ENCODE measurements at regions of chr11 and their contacts with region 1.

Region 1: DNA sequence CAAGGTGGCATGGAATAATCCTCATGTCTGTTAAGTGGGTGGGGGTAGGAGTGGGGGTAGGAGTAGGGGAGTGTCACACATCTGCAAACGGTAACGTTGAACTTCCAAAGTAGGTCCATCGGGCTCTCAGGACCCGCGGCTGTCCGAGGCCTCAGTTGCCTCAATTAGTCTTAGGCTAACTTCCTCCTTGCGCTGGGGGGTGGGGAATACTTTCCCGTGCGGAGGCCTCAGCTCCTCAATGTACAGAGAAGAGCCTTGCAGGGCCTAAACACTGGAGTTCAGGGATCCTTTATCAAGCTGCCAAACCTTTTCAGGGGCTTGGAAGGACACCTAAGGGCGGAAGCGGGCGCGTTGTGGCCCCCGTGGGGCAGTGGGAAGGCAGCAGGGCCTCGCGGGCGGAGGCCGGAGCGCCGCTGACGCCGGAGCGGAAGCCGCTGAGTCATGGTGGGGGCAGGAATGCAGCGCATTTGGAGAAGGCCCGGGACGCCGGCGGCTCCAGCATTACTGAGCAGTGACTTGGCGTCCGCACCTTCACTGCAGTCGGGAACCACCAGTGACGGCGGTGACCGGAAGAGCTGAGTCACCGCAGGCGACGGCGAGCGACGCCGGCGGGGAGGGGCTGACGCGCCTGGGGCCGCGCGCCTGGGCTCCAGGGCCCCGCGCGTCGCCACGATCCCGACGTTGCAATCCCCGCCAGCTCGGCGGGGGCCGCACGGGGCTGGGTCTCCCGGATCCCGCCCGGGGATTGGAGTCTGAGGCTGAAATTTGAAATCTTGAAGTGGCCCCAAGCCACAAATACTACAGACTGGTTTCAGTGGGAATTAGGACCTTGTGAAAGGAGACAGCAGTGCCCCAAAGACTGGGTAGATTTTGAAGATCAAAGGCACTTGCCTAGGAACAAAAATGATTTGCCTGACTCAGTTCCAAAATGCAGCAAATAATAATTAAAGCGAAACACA is 20.2 kb upstream of the IPO7 start:
- DNase-seq: peak; percentile 92
- H3K4me3 Mint-ChIP-seq: peak overlapping the region; percentile 82
- H3K27ac Mint-ChIP-seq: peak overlapping the region; percentile 93
- H3K4me1 Mint-ChIP-seq: peaks cover 14% of the 10 kb centered on the region
- H3K27me3 Mint-ChIP-seq: peaks cover 4% of the 10 kb centered on the region

Region 2: DNA sequence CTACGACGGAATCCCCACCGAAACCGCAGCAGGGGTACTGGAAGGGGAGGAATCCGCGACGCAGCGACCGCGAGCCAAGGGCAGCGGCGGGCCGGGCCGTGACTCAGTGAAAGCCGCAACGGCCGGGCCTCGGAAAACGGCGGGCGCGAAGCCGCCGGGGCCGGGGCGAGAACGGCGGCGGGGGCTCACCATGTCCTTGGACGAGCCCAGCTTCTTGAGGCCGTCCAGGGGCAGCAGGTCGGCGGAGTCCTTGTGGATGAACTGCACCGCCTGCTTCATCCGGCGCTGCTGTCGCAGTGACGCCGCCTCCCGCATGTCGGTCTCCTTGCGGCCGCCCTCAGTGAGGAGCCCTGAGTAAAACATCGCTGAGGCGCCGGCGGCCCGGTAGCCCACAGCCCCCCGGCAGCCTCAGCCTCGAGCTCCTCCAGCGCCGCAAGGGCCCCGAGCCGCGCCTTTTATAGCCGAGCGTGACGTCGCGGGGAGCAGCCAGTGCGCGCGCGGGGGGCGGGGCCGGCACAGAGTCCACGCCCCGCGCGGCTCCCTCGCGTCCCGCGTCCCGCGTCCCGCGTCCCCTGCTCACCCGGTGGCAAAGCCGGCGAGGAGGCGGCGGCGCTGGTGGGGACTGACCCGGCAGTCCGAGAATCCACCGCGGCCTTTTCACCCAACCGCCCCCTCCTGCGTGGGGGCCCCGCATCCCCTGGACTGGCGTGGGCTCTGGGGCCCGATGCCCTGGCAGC is 360.5 kb before region 1 on chr11 and contains the start of gene NRIP3:
- intact Hi-C with region 1: loop called (anchors 5 kb)
- DNase-seq: peak; percentile 94
- H3K4me3 Mint-ChIP-seq: peak within 1 kb of the TSS; percentile 86
- H3K27ac Mint-ChIP-seq: peak within 1 kb of the TSS; percentile 77
- H3K4me1 Mint-ChIP-seq: peaks cover 26% of the 10 kb centered on the region
- H3K27me3 Mint-ChIP-seq: peaks cover 45% of the 10 kb centered on the region
- total RNA-seq, gene NRIP3: 4.8 and 5.3 TPM in 2 replicates

Region 3: DNA sequence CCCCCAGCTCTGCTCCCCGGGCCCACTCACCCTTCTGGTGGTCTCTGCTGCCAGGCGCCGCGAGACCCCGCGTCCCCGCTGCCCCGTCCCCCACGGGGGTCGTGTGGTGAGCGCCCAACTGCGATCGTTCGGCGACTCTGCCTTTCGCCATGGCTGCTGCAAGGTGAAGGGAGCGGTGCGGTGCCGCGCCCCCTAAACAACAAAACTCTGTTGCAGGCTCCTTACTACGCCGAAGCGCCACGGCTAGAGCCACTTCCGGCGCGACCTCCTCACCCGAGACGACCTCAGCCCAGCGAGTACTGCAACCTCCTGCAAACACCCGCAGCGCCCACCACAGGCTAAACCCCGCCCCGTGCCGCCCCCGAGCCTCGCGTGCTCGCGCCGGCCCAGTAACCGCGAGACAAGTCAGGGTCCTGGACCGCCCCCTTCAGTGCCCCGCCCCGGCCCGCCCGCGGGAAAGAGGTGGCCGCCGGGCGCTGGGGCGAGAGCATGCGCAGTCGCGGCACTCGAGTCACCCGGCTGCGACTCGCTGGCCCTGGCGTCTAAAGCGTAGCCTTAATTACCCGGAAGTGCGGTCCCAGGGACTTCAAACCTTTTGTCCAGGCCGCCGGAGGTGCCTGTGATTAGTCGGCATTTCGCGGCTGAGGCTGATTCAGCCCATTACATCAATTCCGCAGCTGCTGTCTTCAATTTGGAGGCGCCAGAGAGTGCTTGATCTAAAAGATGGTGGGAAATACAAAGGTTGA is 49.8 kb before region 1 on chr11 and contains the start of gene TMEM41B:
- intact Hi-C with region 1: loop called (anchors 1 kb)
- DNase-seq: peak; percentile 100
- H3K4me3 Mint-ChIP-seq: peak within 1 kb of the TSS; percentile 99
- H3K27ac Mint-ChIP-seq: peak within 1 kb of the TSS; percentile 97
- H3K4me1 Mint-ChIP-seq: peaks cover 38% of the 10 kb centered on the region
- H3K27me3 Mint-ChIP-seq: peaks cover 23% of the 10 kb centered on the region
- total RNA-seq, gene TMEM41B: 26.5 and 30.5 TPM in 2 replicates

Region 4: DNA sequence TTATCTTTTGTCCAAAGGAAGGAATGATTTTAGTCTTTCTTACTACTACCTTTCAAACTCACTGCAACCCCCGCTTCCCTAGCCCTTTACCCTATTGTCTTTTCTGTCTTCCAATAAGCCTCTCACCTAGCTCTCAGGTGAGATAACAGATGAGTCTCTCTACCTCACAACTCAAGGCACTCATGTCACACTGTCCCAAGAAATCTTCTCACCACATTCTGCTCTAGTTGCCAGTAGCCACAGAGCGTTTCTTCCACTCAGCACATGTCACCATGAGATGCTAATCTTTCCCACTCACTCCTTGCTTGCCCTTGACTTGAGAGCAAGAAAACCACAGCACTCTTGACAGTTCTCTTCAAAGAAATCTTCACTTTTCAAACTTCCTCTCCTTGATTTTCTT is 17.1 kb before region 1 on chr11:
- intact Hi-C with region 1: loop called (anchors 2 kb)
- DNase-seq: peak; percentile 75
- H3K4me3 Mint-ChIP-seq: no peak overlapping the region
- H3K27ac Mint-ChIP-seq: peak overlapping the region; percentile 0
- H3K4me1 Mint-ChIP-seq: peaks cover 12% of the 10 kb centered on the region
- H3K27me3 Mint-ChIP-seq: peaks cover 16% of the 10 kb centered on the region

Region 5: DNA sequence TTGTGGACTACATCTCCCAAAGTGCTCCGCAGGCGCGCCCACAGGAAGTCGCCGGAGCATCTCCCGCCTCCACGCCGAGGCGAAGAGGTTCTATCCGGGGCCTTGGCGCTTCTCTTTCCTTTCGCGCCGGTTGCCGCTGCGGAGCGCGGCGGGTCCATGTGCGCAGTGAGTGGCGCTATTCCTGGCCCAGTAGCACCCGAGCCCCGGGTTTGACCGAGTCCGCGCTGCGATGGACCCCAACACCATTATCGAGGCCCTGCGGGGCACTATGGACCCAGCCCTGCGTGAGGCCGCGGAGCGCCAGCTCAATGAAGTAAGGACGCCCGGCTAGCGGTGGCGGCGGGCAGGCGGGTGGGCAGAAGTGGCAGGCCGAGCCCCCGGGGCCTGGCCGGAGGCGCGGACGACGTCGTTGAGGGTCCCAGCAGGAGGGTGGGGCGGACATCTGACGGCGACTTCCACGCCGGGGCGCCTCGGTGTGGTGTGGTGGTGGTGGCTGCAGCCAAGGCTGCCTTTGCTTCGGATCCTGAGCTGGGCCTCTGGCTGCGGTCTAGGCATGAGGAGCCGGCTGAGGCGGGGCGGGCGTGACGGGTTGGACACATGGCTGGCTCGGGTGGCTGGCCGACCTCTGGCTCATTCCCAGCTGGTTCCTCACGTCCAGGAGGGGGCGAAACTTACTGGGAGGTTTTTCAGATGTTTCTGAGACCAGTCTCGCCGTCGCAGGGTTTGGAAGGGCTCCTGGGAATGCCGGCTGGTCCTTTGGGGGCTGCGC is 20.5 kb after region 1 on chr11 and contains the start of gene IPO7:
- intact Hi-C with region 1: loop called (anchors 1 kb)
- DNase-seq: peak; percentile 97
- H3K4me3 Mint-ChIP-seq: peak within 1 kb of the TSS; percentile 95
- H3K27ac Mint-ChIP-seq: peak within 1 kb of the TSS; percentile 94
- H3K4me1 Mint-ChIP-seq: peaks cover 21% of the 10 kb centered on the region
- H3K27me3 Mint-ChIP-seq: no peaks in the 10 kb centered on the region
- total RNA-seq, gene IPO7: 177 and 200 TPM in 2 replicates

Measured in activated CD4-positive, alpha-beta T cell treated with anti-CD3 and anti-CD28 coated beads, Interleukin-2, amount 10 ng/mL, durations not matched to agents 24 days and 14 days (primary cell).